Ascending aorta (tissue), 2 donors: ENCODE measurements at regions of chr12 and their contacts with region 1.

Region 1: DNA sequence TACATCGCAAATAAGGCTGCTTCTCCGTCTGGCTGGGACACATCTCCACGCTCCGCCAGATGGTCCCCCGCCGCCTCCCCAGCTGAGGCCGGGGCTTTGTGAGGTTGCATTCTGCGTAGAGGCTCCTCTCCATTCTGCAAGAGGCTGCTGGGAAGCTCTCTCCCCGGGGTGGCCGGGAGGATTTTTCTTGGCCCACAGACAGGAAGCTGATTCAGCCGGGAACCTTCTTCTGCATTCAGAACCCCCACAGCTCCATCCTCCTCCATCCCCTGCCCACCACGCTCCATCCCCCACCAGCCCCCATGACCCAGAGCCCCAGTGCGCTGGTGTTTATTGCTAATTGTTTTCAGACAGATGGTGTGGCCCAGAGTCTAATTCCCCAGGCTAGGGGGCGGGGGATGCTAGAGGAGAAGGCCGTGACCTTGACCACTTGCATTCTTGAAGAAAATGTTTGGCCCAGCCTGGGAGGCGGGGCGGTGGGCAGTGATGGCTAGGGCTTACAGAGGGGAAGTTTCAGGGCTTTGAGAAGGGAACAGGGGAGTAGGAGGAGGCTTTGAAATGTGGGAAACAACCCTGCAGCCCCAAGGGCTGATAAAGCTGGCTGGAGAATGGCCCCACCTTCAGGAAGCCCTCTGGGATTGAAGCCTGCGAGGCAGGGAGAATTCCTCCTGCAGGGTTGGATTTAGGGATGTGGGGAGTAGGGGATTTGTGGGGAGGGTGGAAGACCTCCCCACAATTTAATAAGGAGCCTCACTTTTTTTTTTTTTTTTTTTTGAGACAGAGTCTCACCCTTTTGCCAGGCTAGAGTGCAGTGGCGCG is 88.5 kb upstream of the NCOR2 start:
- DNase-seq: peak in 1 of 2 donors; percentile 90
- H3K4me3 ChIP-seq: peak overlapping the region; percentile 31 to 54
- H3K27ac ChIP-seq: peak overlapping the region; percentile 45 to 73
- H3K4me1 ChIP-seq: peaks cover 6 to 36% of the 10 kb centered on the region in 2 donors
- H3K27me3 ChIP-seq: no peaks in the 10 kb centered on the region
- CTCF ChIP-seq: no peak

Region 2: DNA sequence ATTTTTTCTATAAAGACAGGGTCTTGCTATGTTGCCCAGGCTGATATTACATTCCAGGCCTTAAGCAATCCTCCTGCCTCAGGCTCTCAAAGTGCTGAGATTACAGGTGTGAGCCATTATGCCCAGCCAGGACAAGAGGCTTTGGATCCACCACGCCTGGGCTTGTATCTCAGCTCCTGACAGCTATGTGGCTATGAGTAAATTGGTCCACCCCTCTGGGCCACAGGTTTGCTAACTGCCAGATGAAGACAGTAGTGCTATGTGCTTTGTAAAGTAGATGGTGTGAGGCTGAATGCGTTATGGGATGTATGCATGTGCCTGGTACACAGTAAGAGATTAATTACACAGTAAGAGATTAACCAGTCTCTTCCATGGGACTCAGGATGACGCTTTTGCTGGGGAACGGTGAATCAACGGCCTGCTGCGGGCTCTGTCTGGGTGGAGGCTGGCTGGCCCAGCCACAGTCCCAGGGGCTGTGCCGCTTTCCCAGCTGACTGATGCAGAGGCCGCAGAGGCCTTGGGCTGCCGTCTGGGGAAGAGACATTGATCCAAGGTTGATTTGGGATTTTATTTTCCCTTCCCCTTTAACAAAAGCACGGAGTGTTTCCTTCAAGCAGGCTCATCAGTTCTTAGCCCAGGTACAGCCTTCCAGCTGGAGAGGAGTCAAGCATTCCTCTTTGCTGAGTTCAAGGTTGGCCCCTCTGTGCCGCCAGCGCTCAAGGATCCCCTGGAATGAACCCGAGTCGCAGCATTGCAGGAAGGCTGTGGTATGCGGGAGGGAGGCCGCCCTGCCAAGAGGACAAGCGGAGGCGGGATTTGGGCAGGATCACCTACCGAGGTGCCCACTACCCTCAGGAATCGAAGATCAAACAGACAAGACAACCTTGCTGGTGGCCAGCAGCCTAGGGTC is 34.9 kb before region 1 on chr12:
- intact Hi-C with region 1: loop called (anchors 1 kb)
- DNase-seq: peak; percentile 41 to 93
- H3K4me3 ChIP-seq: no peak overlapping the region
- H3K27ac ChIP-seq: peak overlapping the region; percentile 50 to 62
- H3K4me1 ChIP-seq: peaks cover 6 to 23% of the 10 kb centered on the region in 2 donors
- H3K27me3 ChIP-seq: no peaks in the 10 kb centered on the region
- CTCF ChIP-seq: no peak

Region 3: DNA sequence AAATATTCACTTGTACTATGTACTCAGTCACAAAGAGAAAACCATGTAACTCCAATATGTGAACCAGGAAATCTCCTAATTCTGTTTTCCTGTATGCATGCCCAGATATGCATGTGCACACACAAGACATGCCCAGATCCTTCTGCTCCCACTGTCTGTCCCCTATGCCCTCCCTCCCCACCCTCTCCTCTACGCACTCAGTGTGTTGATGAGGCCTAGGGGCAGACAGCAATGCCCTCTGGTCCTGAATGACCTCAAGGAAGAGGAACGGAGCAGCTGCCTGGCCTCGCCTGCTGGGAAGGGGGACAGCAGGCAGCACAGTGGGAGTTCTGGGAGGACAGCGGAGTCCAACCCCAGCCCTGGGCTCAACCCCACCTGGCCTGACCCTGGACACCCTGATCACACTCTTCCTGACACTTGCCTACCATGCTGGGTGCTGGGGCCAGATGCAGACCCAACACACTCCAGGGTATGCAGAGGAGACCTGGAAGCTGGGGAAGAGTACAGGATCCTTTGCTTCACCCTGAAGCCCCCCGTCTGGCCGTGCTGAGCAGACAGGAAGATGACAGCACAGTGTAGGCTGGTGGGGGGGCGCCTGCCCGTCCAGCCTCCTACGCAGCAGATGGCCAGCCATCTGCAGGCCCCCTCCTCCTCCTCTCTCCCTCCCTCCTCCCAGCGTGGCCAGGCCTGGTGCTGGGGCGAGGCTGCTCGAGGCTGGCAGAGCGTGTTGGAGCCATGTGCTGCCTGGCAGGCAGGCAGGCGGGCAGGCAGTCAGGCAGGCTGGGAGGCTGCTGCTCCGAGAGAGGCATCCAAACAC is 18.1 kb after region 1 on chr12:
- intact Hi-C with region 1: no loop called
- DNase-seq: no peak
- H3K4me3 ChIP-seq: no peak overlapping the region
- H3K27ac ChIP-seq: peak overlapping the region in 1 of 2 donors; percentile 56
- H3K4me1 ChIP-seq: peaks cover 0 to 19% of the 10 kb centered on the region in 2 donors
- H3K27me3 ChIP-seq: no peaks in the 10 kb centered on the region
- CTCF ChIP-seq: no peak